ENCODE measurements at regions of chr13 and their contacts with region 1.

Region 1: DNA sequence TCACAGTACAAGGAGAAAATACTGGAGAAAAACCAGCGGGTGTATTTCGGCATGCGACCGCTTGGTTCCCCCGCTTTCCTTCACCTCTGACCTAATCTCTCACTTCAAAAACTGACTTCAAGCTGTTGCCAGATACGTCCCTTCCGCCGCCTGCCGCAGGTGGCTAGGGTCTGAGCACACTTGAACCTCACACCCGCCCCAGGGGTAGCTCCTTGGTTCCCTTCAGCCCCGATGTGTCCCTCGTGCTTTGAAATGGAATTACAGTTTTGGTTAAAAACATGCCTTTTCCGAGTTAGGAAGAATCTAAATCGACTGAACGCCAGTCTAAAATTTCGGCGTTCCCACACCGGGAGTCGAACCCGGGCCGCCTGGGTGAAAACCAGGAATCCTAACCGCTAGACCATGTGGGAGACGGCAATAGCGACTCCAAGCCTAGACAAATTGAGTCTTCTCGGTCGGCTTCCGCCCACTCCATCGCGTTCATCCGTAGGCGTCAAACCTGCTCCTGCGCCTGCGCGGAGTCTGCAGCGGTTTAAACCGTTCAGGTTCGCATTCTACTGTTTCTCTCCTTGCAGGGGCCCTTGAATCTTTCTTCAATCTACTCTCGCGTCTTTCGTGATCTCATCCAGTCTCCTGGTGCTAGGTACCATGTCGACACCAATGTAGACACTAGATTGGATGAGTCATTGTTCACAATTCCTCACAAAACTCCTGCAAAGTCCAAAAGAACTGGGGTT is 71.5 kb downstream of the NUFIP1 start:
- DNase-seq: peak; percentile 97
- H3K4me3 ChIP-seq: peak overlapping the region; percentile 60
- H3K27ac ChIP-seq: peak overlapping the region; percentile 69
- H3K4me1 ChIP-seq: peaks cover 11% of the 10 kb centered on the region
- CTCF ChIP-seq: peak; percentile 59

Region 2: GRCh38 chr13:43878892-43879754 is 1038.6 kb before region 1 on chr13 and contains the start of gene CCDC122:
- CTCF ChIA-PET with region 1: no interaction called
- POLR2A ChIA-PET with region 1: no interaction called
- intact Hi-C with region 1: loop called (anchors 5 kb)
- DNase-seq: peak; percentile 78
- H3K4me3 ChIP-seq: peak within 1 kb of the TSS; percentile 84
- H3K27ac ChIP-seq: peak within 1 kb of the TSS; percentile 48
- H3K4me1 ChIP-seq: peaks cover 42% of the 10 kb centered on the region
- CTCF ChIP-seq: no peak
- total RNA-seq, gene CCDC122: 4.0 and 4.6 TPM in 2 replicates

Region 3: GRCh38 chr13:44894001-44894780 is 23.6 kb before region 1 on chr13:
- CTCF ChIA-PET with region 1: no interaction called
- POLR2A ChIA-PET with region 1: no interaction called
- intact Hi-C with region 1: no loop called
- DNase-seq: no peak
- H3K4me3 ChIP-seq: no peak overlapping the region
- H3K27ac ChIP-seq: no peak overlapping the region
- H3K4me1 ChIP-seq: no peaks in the 10 kb centered on the region
- CTCF ChIP-seq: no peak

Region 4: DNA sequence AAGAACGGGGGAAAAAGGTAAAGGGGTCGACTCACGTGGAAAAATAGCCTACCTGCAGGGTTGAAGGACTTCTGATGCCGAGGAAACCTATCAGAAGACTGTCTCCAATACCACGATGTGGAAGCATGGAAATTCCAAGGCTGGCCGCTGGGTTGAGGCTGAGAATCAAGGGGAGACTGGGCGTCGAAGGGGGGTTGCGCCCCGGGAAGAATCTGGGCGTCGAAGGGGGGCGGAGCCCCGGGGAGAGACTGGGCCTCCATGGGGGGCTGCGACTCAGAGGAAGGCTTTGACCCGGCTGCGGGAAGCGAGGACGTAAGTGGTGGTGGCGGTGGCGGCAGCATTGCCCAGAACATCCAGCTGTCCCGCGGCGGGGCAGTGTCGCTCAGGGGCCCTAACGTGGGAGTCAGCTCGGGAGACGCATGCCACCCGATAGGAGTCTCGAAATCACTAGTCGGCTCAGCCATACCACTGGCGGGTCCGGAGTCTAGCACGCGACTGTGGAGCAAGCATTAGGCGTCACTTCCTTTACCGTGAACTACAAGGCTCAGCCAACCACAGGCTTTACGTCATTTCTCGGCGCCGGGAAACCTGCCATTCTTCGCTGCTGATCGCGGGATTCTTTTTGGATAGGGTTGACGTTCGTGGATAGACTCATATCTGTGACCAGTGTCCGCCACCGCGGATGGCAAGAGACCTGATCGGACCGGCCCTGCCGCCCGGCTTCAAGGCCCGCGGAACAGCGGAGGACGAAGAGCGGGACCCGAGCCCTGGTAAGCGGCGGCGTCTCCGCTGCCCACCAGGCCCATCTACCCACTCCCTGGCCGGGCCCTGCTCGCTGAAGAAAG is 71.4 kb after region 1 on chr13 and contains the starts of genes GPALPP1 and NUFIP1:
- CTCF ChIA-PET with region 1: no interaction called
- POLR2A ChIA-PET with region 1: no interaction called
- intact Hi-C with region 1: loop called (anchors 1 kb)
- DNase-seq: peak; percentile 93
- H3K4me3 ChIP-seq: peak within 1 kb of the TSS; percentile 88
- H3K27ac ChIP-seq: peak within 1 kb of the TSS; percentile 16
- H3K4me1 ChIP-seq: peaks cover 27% of the 10 kb centered on the region
- CTCF ChIP-seq: no peak
- total RNA-seq, gene GPALPP1: 50.1 and 54.5 TPM in 2 replicates
- total RNA-seq, gene NUFIP1: 5.4 and 6.8 TPM in 2 replicates

Measured in OCI-LY7 (cell line).